Activated T-helper 2 cell treated with anti-CD3 and anti-CD28 coated beads, Interferon-gamma antibody, Interleukin-2, Interleukin-4, amounts not matched to agents 10 μg/mL and 5 μg/mL and 100 μg/mL, durations not matched to agents 14 hours and 24 hours and 36 hours (primary cell): ENCODE measurements at regions of chr5 and their contacts with region 1.

Region 1: GRCh38 chr5:14142827-14143548 is at the start of gene TRIO:
- DNase-seq: peak; percentile 66
- H3K4me3 Mint-ChIP-seq: peak within 1 kb of the TSS; percentile 79
- H3K27ac Mint-ChIP-seq: peak within 1 kb of the TSS; percentile 58
- H3K4me1 Mint-ChIP-seq: peaks cover 10% of the 10 kb centered on the region
- H3K27me3 Mint-ChIP-seq: peaks cover 53% of the 10 kb centered on the region
- total RNA-seq, gene TRIO: 28.7 and 30.1 TPM in 2 replicates

Region 2: GRCh38 chr5:14108170-14108996 is 34.6 kb before region 1 on chr5:
- intact Hi-C with region 1: loop called (anchors 2 kb)
- DNase-seq: no peak
- H3K4me3 Mint-ChIP-seq: no peak overlapping the region
- H3K27ac Mint-ChIP-seq: no peak overlapping the region
- H3K4me1 Mint-ChIP-seq: peaks cover 16% of the 10 kb centered on the region
- H3K27me3 Mint-ChIP-seq: peaks cover 14% of the 10 kb centered on the region

Region 3: GRCh38 chr5:14264604-14265316 is 121.8 kb after region 1 on chr5:
- intact Hi-C with region 1: loop called (anchors 10 kb)
- DNase-seq: peak; percentile 69
- H3K4me3 Mint-ChIP-seq: no peak overlapping the region
- H3K27ac Mint-ChIP-seq: no peak overlapping the region
- H3K4me1 Mint-ChIP-seq: peaks cover 13% of the 10 kb centered on the region
- H3K27me3 Mint-ChIP-seq: peaks cover 27% of the 10 kb centered on the region

Region 4: GRCh38 chr5:14351845-14352712 is 209.1 kb after region 1 on chr5:
- intact Hi-C with region 1: no loop called
- DNase-seq: peak; percentile 33
- H3K4me3 Mint-ChIP-seq: no peak overlapping the region
- H3K27ac Mint-ChIP-seq: no peak overlapping the region
- H3K4me1 Mint-ChIP-seq: no peaks in the 10 kb centered on the region
- H3K27me3 Mint-ChIP-seq: peaks cover 6% of the 10 kb centered on the region

Region 5: GRCh38 chr5:14428302-14429081 is 285.5 kb after region 1 on chr5:
- intact Hi-C with region 1: no loop called
- DNase-seq: no peak
- H3K4me3 Mint-ChIP-seq: no peak overlapping the region
- H3K27ac Mint-ChIP-seq: no peak overlapping the region
- H3K4me1 Mint-ChIP-seq: peaks cover 25% of the 10 kb centered on the region
- H3K27me3 Mint-ChIP-seq: peaks cover 2% of the 10 kb centered on the region